SK-N-SH (cell line): ENCODE measurements at regions of chr13 and their contacts with region 1.

Region 1: DNA sequence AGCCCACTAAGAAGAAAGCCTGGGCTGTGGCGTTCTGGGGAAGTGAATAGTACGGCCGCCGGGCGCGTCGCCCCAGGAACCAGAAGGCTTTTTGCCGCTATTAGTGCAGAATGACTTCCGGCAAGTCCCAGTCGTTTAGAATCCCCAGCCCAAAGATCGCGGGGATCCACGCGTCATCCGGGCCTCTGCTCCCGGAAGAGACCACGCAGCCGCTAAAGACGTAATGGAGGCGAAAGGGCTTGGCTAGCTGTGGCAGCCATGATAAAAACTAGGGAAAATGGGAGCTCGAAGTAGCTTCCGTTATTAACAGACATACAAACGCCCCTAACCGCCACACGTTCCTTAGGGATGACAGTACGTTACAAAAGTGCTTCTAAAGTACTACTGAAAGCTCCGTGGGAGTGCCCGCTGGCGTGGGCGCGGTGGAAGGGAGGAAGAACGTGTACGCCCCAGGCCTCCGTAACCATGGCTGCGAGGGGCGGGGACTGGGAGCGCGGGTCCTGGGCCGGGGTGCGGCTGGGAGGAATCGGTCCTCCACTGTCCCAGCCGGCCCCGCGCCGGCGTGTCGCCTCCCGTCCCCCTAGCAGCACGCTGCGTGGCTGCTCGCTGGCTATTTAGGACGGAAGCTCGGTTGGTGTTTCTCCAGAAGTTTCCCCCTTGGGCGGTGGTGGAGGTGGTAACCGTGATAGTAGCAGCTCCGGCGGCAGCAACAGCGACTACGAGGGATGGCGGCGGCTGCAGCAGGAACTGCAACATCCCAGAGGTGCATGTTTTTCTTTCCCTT is at the start of gene SUGT1:
- DNase-seq: peak; percentile 91
- H3K4me3 ChIP-seq: peak within 1 kb of the TSS; percentile 81 to 96
- H3K27ac ChIP-seq: peak within 1 kb of the TSS; percentile 100
- H3K4me1 ChIP-seq: peaks cover 0 to 6% of the 10 kb centered on the region in 2 experiments; a peak in 2 of 4 replicates
- H3K27me3 ChIP-seq: no peaks in the 10 kb centered on the region
- CTCF ChIP-seq: peak; percentile 68
- EP300 ChIP-seq: 0 out of 4 replicates have a peak, but pooled peaks of 1 of the 2 experiments have one; percentile 43
- RAD21 ChIP-seq: no peak
- polyA plus RNA-seq, gene SUGT1: 17.8 and 18.6 TPM in 2 replicates

Region 2: DNA sequence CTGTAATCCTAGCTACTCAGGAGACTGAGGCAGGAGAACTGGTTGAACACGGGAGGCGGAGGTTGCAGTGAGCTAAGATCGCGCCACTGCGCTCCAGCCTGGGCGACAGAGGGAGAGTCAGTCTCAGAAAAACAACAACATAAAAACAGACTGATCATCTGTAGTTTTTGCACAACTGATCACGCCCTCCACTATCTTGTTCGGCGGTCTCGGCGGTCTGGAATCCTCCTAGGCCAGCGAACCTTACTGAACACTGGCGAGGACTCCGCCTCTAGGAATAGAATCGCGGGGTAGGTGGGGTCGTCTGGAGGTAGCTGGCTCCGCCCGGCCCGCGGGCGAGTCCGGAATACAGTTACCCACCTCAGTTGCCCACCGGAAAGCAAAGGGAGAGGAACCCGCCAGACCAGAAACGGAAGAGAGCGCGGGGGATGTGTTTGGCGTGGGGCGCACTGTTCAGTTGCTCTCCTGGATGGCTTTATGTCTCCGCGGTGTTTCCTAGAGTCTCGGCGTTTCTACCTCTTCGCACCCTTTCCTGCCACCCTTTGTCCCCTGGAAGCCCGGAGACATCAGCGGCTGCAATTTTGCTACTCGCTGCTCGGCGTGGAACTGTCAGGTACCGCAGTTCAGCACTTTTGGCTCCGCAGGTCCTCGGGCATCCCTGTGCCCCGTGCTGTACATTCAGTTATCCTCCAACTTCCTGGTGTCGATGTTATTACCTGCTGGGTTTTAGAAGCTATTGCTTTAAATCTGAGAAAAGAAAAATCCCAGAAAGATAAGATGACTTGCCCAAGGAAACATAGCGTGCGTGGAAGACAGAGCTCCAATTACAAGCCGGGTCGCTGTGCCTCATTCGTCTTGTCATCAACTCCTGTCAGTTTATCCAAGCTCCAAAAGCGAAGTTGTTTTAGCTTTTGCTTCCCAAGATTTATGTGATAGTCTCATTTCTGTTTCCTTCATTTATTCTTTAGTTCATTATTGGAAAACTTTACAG is 35.0 kb before region 1 on chr13:
- CTCF ChIA-PET with region 1: interaction called, 20 read pairs
- POLR2A ChIA-PET with region 1: interaction called, 25 read pairs
- DNase-seq: peak; percentile 88
- H3K4me3 ChIP-seq: peak overlapping the region; percentile 88 to 99
- H3K27ac ChIP-seq: peak overlapping the region; percentile 55 to 64
- H3K4me1 ChIP-seq: no peaks in the 10 kb centered on the region; a peak in 1 of 4 replicates
- H3K27me3 ChIP-seq: no peaks in the 10 kb centered on the region
- CTCF ChIP-seq: no peak
- EP300 ChIP-seq: no peak
- RAD21 ChIP-seq: no peak